Endothelial cell of umbilical vein (primary cell): ENCODE measurements at regions of chr17 and their contacts with region 1.

Region 1: GRCh38 chr17:48543107-48543853 is 1.6 kb downstream of the HOXB2 start:
- DNase-seq: peak; percentile 61
- H3K4me3 ChIP-seq: peak overlapping the region; percentile 88 to 99 (median 97)
- H3K27ac ChIP-seq: peak overlapping the region; percentile 80
- H3K4me1 ChIP-seq: peaks cover 41% of the 10 kb centered on the region
- H3K27me3 ChIP-seq: no peaks in the 10 kb centered on the region
- CTCF ChIP-seq: peak in 1 of 2 donors; percentile 3
- POLR2A ChIP-seq: no peak

Region 2: DNA sequence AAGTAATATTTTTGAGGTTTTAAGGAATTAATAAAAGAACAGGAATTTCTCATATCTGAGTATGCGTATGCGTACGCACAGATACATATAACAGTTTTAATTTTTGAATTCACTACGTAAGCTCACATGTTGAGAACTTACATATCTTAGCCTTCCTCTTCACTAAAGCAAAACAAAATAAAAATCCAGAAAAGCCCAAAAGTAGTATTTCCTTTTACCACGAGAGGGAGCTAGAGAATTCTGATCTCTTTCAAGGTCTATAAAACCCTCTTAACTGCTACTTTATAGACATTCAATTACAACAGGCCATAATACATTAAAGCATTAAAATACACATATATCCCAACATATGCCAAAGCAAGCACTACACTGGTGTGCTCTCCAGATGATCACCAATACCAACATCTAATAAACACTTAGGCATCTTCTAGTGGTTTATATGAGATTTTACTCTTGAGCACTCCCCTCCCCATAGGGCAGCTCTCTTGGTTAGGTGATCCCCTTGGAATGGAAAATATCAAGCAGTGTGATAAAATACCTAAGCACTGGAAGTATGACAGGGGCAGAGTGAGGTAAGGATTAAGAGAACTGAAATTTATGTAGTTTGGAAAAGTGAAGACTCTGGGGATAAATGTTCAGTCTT is 207.3 kb before region 1 on chr17:
- CTCF ChIA-PET with region 1: interaction called, 14 read pairs
- POLR2A ChIA-PET with region 1: no interaction called
- dilution Hi-C with region 1: no loop called
- intact Hi-C with region 1: no loop called
- DNase-seq: peak; percentile 87
- H3K4me3 ChIP-seq: no peak overlapping the region
- H3K27ac ChIP-seq: no peak overlapping the region
- H3K4me1 ChIP-seq: no peaks in the 10 kb centered on the region
- H3K27me3 ChIP-seq: peaks cover 0 to 3% of the 10 kb centered on the region in 2 experiments
- CTCF ChIP-seq: peak; percentile 47 to 55
- POLR2A ChIP-seq: no peak

Region 3: GRCh38 chr17:48492401-48493298 is 50.6 kb before region 1 on chr17:
- CTCF ChIA-PET with region 1: interaction called, 3 read pairs
- POLR2A ChIA-PET with region 1: no interaction called
- dilution Hi-C with region 1: no loop called
- intact Hi-C with region 1: loop called (anchors 2 kb)
- DNase-seq: peak; percentile 62
- H3K4me3 ChIP-seq: peak overlapping the region in 2 of 3 experiments; percentile 10 to 16
- H3K27ac ChIP-seq: no peak overlapping the region
- H3K4me1 ChIP-seq: peaks cover 10% of the 10 kb centered on the region
- H3K27me3 ChIP-seq: peaks cover 2 to 3% of the 10 kb centered on the region in 2 experiments
- CTCF ChIP-seq: peak; percentile 84 to 90
- POLR2A ChIP-seq: no peak

Region 4: DNA sequence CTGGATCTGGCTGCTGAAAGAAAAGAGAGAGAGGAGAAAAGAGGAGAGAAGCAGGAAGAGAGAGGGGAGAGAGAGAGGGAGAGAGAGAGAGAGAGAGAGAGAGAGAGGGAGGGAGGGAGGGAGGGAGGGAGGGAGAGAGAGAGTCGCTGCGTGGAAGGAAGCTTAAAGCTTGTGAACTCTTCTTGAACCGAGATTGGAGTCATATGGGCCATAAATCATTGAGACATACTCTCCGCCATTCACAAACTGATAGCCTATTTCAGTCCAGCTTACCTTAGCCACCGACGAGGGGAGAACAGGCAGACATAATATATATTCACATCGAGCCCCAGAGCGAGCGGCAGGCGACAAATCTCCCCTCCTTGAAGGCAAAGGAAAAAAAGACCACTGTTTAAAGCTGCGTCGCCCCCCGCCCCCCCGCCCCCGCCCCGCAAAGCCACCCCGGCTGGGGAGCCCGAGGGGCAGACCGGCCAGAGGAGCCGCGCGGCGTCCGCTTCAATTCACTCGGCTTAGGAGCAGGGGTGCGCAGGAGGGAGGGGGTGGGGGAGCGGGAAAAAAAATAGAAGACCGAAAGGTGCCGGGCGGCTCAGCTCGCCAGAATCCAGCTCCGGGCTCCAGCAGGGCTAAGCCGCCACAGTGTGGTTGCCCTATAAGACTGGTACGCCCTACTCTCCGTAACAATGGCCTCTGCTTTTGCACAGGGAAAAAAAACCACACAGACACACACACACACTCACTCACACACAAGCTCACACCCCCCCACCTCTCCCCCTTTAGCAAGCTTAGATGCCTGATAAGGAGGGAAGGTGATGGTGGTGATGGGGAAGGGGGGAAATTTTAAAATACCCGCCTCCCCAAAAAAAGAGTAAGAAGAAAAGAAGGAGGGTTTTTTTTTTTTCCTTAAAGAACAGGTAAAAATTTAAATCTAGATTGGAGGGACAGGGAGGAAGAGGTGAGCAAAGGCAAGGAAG is 12.3 kb after region 1 on chr17:
- CTCF ChIA-PET with region 1: interaction called, 15 read pairs
- POLR2A ChIA-PET with region 1: interaction called, 10 read pairs
- dilution Hi-C with region 1: no loop called
- intact Hi-C with region 1: loop called (anchors 1 kb)
- DNase-seq: peak; percentile 89
- H3K4me3 ChIP-seq: peak overlapping the region; percentile 13 to 31 (median 14)
- H3K27ac ChIP-seq: no peak overlapping the region
- H3K4me1 ChIP-seq: peaks cover 28% of the 10 kb centered on the region
- H3K27me3 ChIP-seq: no peaks in the 10 kb centered on the region
- CTCF ChIP-seq: no peak
- POLR2A ChIP-seq: no peak

Region 5: DNA sequence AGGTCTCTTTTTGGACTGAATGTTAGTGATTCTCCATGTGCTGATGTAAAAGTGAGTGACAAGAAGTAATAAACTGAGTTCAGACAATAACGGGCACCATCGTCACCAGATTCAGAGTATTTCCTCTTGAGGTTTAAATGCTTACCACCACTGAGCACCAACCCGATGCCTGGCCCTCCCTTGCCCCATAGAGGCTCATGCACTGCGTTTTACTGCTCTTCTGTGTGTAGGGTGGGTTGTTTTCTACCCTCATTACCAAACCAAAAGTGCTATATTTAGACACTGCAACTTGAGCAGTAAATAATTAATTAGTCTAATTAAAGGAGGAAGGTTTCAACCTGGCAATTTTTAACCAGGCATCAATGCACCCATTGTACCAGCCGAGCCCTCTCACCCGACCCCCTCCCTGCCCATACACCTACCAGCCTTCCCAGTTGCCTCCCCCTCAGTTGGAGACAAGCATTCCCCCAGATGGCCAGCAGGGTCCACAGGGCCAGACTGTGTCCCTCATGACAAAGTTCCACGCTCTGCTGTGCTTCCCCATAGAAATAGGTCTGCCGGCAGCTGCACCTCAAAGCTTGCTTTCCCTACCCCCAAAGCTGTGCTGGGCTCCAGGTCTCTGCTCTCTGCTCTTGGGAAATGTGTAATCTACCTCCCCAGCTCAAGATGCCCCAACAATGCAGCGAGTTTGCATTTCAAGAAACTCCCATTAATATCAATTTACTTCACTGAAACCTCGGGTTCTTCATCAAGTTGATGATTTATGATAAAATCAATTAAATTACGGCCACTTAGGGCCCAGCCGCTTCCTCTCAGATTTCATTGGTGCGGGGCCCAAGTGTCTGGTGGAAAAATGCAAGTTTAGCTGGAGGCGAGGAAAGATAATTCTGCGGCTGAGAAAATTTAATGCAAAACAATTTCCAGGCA is 18.9 kb after region 1 on chr17:
- CTCF ChIA-PET with region 1: interaction called, 28 read pairs
- POLR2A ChIA-PET with region 1: interaction called, 10 read pairs
- dilution Hi-C with region 1: no loop called
- intact Hi-C with region 1: loop called (anchors 2 kb)
- DNase-seq: no peak
- H3K4me3 ChIP-seq: no peak overlapping the region
- H3K27ac ChIP-seq: no peak overlapping the region
- H3K4me1 ChIP-seq: peaks cover 32% of the 10 kb centered on the region
- H3K27me3 ChIP-seq: no peaks in the 10 kb centered on the region
- CTCF ChIP-seq: peak; percentile 34 to 51
- POLR2A ChIP-seq: no peak

Region 6: GRCh38 chr17:48571024-48571818 is 27.9 kb after region 1 on chr17:
- CTCF ChIA-PET with region 1: interaction called, 28 read pairs
- POLR2A ChIA-PET with region 1: interaction called, 8 read pairs
- dilution Hi-C with region 1: no loop called
- intact Hi-C with region 1: loop called (anchors 1 kb)
- DNase-seq: peak; percentile 80
- H3K4me3 ChIP-seq: peak overlapping the region in 2 of 3 experiments; percentile 14 to 53
- H3K27ac ChIP-seq: peak overlapping the region; percentile 68
- H3K4me1 ChIP-seq: peaks cover 94% of the 10 kb centered on the region
- H3K27me3 ChIP-seq: no peaks in the 10 kb centered on the region
- CTCF ChIP-seq: no peak
- POLR2A ChIP-seq: peak; percentile 40

Region 7: GRCh38 chr17:48579760-48580554 is 36.7 kb after region 1 on chr17:
- CTCF ChIA-PET with region 1: interaction called, 5 read pairs
- POLR2A ChIA-PET with region 1: interaction called, 3 read pairs
- dilution Hi-C with region 1: no loop called
- intact Hi-C with region 1: loop called (anchors 1 kb)
- DNase-seq: peak; percentile 79
- H3K4me3 ChIP-seq: peak overlapping the region; percentile 14 to 67 (median 20)
- H3K27ac ChIP-seq: peak overlapping the region; percentile 71
- H3K4me1 ChIP-seq: peaks cover 53% of the 10 kb centered on the region
- H3K27me3 ChIP-seq: no peaks in the 10 kb centered on the region
- CTCF ChIP-seq: no peak
- POLR2A ChIP-seq: no peak